CD4-positive, alpha-beta memory T cell (primary cell): ENCODE measurements at regions of chrX and their contacts with region 1.

Region 1: GRCh38 chrX:119791438-119792231 is at the start of gene RPL39:
- DNase-seq: peak; percentile 78 to 89 (median 85)
- H3K4me3 ChIP-seq: peak within 1 kb of the TSS; percentile 70 to 83
- H3K4me3 Mint-ChIP-seq: peak within 1 kb of the TSS; percentile 91 to 96 (median 95)
- H3K27ac ChIP-seq: peak within 1 kb of the TSS; percentile 90
- H3K27ac Mint-ChIP-seq: peak within 1 kb of the TSS; percentile 96 to 99 (median 98)
- H3K4me1 ChIP-seq: peaks cover 40% of the 10 kb centered on the region
- H3K4me1 Mint-ChIP-seq: peaks cover 10 to 52% (median 22%) of the 10 kb centered on the region in 4 donors
- H3K27me3 ChIP-seq: no peaks in the 10 kb centered on the region
- H3K27me3 Mint-ChIP-seq: no peaks in the 10 kb centered on the region
- total RNA-seq, gene RPL39: 3,907 to 4,108 TPM

Region 2: GRCh38 chrX:119468930-119469635 is 322.6 kb before region 1 on chrX:
- CTCF ChIA-PET with region 1: no interaction called
- POLR2A ChIA-PET with region 1: interaction called, 5 read pairs
- intact Hi-C with region 1: loop called (anchors 1 kb)
- DNase-seq: peak; percentile 85 to 88 (median 87)
- H3K4me3 ChIP-seq: peak overlapping the region; percentile 61 to 76
- H3K4me3 Mint-ChIP-seq: peak overlapping the region; percentile 85 to 92 (median 86)
- H3K27ac ChIP-seq: peak overlapping the region; percentile 93
- H3K27ac Mint-ChIP-seq: peak overlapping the region; percentile 89 to 97 (median 96)
- H3K4me1 ChIP-seq: peaks cover 17% of the 10 kb centered on the region
- H3K4me1 Mint-ChIP-seq: peaks cover 4 to 11% (median 7%) of the 10 kb centered on the region in 4 donors
- H3K27me3 ChIP-seq: no peaks in the 10 kb centered on the region
- H3K27me3 Mint-ChIP-seq: no peaks in the 10 kb centered on the region

Region 3: DNA sequence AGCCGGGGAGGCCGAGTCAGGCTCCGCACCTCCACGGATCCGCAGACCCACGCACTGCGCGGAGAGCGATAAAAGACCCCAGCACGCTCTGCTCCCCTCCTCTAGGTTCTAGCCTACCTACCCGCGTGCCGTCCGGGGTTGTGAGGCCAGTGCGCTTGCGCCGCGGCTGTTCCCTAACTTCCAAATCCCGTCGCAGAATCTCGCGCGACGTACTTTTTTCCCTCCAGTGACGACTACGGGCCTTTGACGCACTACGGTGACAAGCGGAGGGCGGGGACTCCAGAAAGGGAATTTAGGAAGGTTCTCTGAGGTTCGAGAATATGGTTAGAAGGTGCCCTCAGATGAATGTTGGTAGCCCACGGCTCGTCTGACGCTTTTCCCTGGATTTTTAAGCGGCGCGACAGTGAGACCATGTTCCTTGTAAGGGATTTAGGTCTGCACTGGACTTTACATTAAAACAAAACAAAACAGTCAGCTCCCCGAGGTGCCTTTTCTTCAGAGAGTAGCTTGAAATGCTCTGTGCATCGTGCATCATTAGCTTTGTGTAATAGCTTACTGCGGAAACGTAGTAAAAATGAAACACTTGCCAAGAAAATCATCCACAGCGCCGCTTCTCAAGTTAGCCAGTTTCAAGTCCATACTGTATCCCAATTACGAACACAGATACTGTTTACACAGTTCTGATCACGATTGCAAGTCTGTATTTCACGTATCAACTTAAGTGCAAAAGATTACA is 185.2 kb before region 1 on chrX and contains the start of gene NKRF:
- CTCF ChIA-PET with region 1: no interaction called
- POLR2A ChIA-PET with region 1: interaction called, 15 read pairs
- intact Hi-C with region 1: no loop called
- DNase-seq: peak; percentile 87 to 94 (median 89)
- H3K4me3 ChIP-seq: peak within 1 kb of the TSS; percentile 73 to 84
- H3K4me3 Mint-ChIP-seq: peak within 1 kb of the TSS; percentile 91 to 97 (median 95)
- H3K27ac ChIP-seq: peak within 1 kb of the TSS; percentile 85
- H3K27ac Mint-ChIP-seq: peak within 1 kb of the TSS; percentile 93 to 99 (median 99)
- H3K4me1 ChIP-seq: peaks cover 26% of the 10 kb centered on the region
- H3K4me1 Mint-ChIP-seq: peaks cover 10 to 46% (median 28%) of the 10 kb centered on the region in 4 donors
- H3K27me3 ChIP-seq: no peaks in the 10 kb centered on the region
- H3K27me3 Mint-ChIP-seq: no peaks in the 10 kb centered on the region
- total RNA-seq, gene NKRF: 13.0 to 14.2 TPM

Region 4: DNA sequence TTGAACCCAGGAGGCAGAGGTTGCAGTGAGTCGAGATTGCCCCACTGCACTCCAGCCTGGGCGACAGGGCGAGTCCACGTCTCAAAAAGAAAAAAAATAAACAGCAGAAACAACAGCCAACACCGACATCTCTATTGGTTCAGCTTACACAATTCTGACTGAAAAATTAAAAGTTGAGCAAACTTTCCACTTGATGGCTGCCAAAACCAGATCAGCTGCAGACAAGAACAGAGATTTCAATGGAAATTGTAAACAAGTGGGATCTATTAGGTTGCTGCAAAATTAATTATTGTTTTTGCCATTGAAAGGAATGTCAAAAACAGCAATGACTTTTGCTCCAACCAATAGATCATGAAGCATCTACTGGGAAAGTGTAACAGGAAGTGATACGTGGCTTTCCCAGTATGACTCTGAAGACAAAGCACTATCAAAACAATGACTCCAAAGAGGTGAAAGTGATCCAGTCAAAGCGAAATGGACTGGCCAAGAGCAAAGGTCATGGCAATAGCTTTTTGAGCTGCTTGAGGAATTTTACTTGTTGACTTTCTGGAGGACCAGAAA is 34.8 kb after region 1 on chrX:
- CTCF ChIA-PET with region 1: interaction called, 6 read pairs
- POLR2A ChIA-PET with region 1: interaction called, 26 read pairs
- intact Hi-C with region 1: no loop called
- DNase-seq: no peak
- H3K4me3 ChIP-seq: no peak overlapping the region
- H3K4me3 Mint-ChIP-seq: no peak overlapping the region
- H3K27ac ChIP-seq: no peak overlapping the region
- H3K27ac Mint-ChIP-seq: no peak overlapping the region
- H3K4me1 ChIP-seq: peaks cover 8% of the 10 kb centered on the region
- H3K4me1 Mint-ChIP-seq: peaks cover 6 to 20% (median 9%) of the 10 kb centered on the region in 4 donors
- H3K27me3 ChIP-seq: no peaks in the 10 kb centered on the region
- H3K27me3 Mint-ChIP-seq: no peaks in the 10 kb centered on the region

Region 5: GRCh38 chrX:119871599-119872395 is 80.2 kb after region 1 on chrX and contains the starts of genes NDUFA1 and RNF113A:
- CTCF ChIA-PET with region 1: interaction called, 10 read pairs
- POLR2A ChIA-PET with region 1: interaction called, 46 read pairs
- intact Hi-C with region 1: loop called (anchors 1 kb)
- DNase-seq: peak; percentile 86 to 91 (median 89)
- H3K4me3 ChIP-seq: peak within 1 kb of the TSS; percentile 78 to 89
- H3K4me3 Mint-ChIP-seq: peak within 1 kb of the TSS; percentile 93 to 100 (median 96)
- H3K27ac ChIP-seq: peak within 1 kb of the TSS; percentile 85
- H3K27ac Mint-ChIP-seq: peak within 1 kb of the TSS; percentile 98 to 100 (median 98)
- H3K4me1 ChIP-seq: peaks cover 15% of the 10 kb centered on the region
- H3K4me1 Mint-ChIP-seq: peaks cover 3 to 39% (median 17%) of the 10 kb centered on the region in 4 donors
- H3K27me3 ChIP-seq: no peaks in the 10 kb centered on the region
- H3K27me3 Mint-ChIP-seq: no peaks in the 10 kb centered on the region
- total RNA-seq, gene NDUFA1: 59.7 to 62.4 TPM
- total RNA-seq, gene RNF113A: 43.0 to 45.3 TPM

Region 6: DNA sequence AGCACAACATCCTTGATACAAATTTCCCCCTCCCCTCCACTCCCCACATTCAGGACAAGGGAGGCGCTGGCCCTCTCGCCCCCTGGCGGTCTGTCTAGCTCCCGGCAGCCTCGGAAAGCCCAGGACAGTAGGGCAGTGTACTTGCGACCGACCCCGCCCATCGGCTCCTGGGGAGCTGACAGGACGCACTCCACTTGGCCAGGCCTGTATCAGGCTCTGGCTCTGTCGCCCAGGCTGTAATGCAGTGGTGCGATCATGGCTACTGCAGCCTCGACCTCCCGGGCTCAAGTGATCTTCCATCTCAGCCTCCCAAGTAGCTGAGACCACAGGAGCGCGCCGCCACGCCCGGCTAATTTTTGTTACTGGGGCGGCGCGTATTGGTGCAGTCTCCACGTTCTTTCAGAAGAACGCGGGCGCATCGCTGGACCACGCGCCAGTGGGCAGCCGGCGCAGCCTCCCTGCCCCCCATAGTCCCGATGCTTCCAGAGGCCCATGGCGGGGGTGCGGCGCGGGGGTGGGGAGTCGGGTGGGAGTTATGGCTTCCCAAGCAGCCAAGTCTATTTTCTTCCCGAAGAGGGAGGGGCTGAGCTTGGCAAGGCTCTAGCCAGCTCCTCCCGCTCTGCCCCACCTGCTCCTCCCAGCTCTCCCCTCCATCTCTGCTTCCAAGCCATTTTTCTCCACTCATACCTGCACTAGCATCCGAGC is 96.2 kb after region 1 on chrX:
- CTCF ChIA-PET with region 1: interaction called, 12 read pairs
- POLR2A ChIA-PET with region 1: interaction called, 17 read pairs
- intact Hi-C with region 1: no loop called
- DNase-seq: peak; percentile 40 to 54 (median 50)
- H3K4me3 ChIP-seq: peak overlapping the region in 1 of 2 donors; percentile 27
- H3K4me3 Mint-ChIP-seq: peak overlapping the region in 7 of 8 donors; percentile 17 to 71 (median 64)
- H3K27ac ChIP-seq: no peak overlapping the region
- H3K27ac Mint-ChIP-seq: no peak overlapping the region
- H3K4me1 ChIP-seq: peaks cover 9% of the 10 kb centered on the region
- H3K4me1 Mint-ChIP-seq: peaks cover 3 to 18% (median 7%) of the 10 kb centered on the region in 4 donors
- H3K27me3 ChIP-seq: no peaks in the 10 kb centered on the region
- H3K27me3 Mint-ChIP-seq: peaks cover 0 to 1% of the 10 kb centered on the region in 2 donors